Activated CD4-positive, alpha-beta T cell treated with anti-CD3 and anti-CD28 coated beads, Interleukin-2, amount 10 ng/mL, durations not matched to agents 24 days and 14 days (primary cell): ENCODE measurements at regions of chr16 and their contacts with region 1.

Region 1: DNA sequence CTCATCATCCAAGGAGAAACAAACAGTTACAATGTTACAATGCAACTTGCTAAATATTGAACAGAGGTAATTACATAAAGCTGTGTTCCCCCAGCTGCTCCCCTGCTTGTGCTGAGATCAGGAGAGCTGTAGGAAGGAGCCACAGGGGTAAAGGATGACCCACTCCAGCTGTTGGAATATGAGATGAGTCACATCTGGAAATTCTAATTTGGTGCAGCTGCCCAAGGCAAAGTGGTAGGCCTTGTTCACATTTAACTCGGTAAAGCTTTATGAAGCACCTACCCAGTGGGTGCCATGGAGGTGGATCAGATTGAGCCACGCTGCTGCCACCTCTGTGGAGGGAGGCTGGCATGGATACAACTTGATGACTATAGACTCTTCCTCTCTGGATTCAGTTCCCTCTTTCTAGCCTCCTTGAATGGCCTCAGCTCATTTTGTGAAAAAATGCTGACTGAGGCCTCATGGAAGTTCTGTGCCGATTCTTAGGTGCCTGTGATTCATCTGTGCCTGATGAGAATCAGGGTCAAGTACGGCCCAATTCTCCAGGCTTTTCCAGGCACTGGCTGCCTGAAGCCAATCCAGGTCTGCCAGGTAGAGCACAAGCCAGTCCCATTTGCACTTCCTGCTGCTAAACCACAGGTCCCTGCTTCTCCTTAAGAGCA is 7.4 kb downstream of the ZNF689 start:
- DNase-seq: no peak
- H3K4me3 Mint-ChIP-seq: no peak overlapping the region
- H3K27ac Mint-ChIP-seq: no peak overlapping the region
- H3K4me1 Mint-ChIP-seq: peaks cover 8% of the 10 kb centered on the region
- H3K27me3 Mint-ChIP-seq: no peaks in the 10 kb centered on the region

Region 2: GRCh38 chr16:30637942-30638341 is 35.2 kb after region 1 on chr16:
- intact Hi-C with region 1: loop called (anchors 5 kb)
- DNase-seq: peak; percentile 79
- H3K4me3 Mint-ChIP-seq: no peak overlapping the region
- H3K27ac Mint-ChIP-seq: peak overlapping the region; percentile 60
- H3K4me1 Mint-ChIP-seq: peaks cover 18% of the 10 kb centered on the region
- H3K27me3 Mint-ChIP-seq: peaks cover 2% of the 10 kb centered on the region